CD8-positive, alpha-beta T cell (primary cell): ENCODE measurements at regions of chr17 and their contacts with region 1.

Region 1: GRCh38 chr17:46940621-46941404 is 17.9 kb downstream of the GOSR2 start:
- DNase-seq: peak; percentile 34 to 77 (median 65)
- ATAC-seq: peak; percentile 87
- H3K4me3 ChIP-seq: no peak overlapping the region
- H3K4me3 Mint-ChIP-seq: no peak overlapping the region
- H3K27ac ChIP-seq: no peak overlapping the region
- H3K27ac Mint-ChIP-seq: peak overlapping the region; percentile 10
- H3K4me1 ChIP-seq: peaks cover 13% of the 10 kb centered on the region
- H3K4me1 Mint-ChIP-seq: peaks cover 19% of the 10 kb centered on the region
- H3K27me3 ChIP-seq: no peaks in the 10 kb centered on the region
- H3K27me3 Mint-ChIP-seq: no peaks in the 10 kb centered on the region
- CTCF ChIP-seq: peak; percentile 66

Region 2: GRCh38 chr17:46841561-46842379 is 99.0 kb before region 1 on chr17:
- CTCF ChIA-PET with region 1: interaction called, 4 read pairs
- POLR2A ChIA-PET with region 1: no interaction called
- intact Hi-C with region 1: loop called in 1 of 2 experiments (anchors 1 kb)
- DNase-seq: peak in 3 of 9 experiments; percentile 34 to 48 (median 35)
- ATAC-seq: peak; percentile 31
- H3K4me3 ChIP-seq: no peak overlapping the region
- H3K4me3 Mint-ChIP-seq: no peak overlapping the region
- H3K27ac ChIP-seq: no peak overlapping the region
- H3K27ac Mint-ChIP-seq: no peak overlapping the region
- H3K4me1 ChIP-seq: no peaks in the 10 kb centered on the region
- H3K4me1 Mint-ChIP-seq: peaks cover 7% of the 10 kb centered on the region
- H3K27me3 ChIP-seq: peaks cover 8 to 14% of the 10 kb centered on the region in 2 experiments
- H3K27me3 Mint-ChIP-seq: peaks cover 52% of the 10 kb centered on the region
- CTCF ChIP-seq: peak; percentile 55

Region 3: GRCh38 chr17:46929413-46929812 is 11.4 kb before region 1 on chr17:
- CTCF ChIA-PET with region 1: interaction called, 10 read pairs
- POLR2A ChIA-PET with region 1: no interaction called
- intact Hi-C with region 1: no loop called
- DNase-seq: no peak
- ATAC-seq: no peak
- H3K4me3 ChIP-seq: no peak overlapping the region
- H3K4me3 Mint-ChIP-seq: no peak overlapping the region
- H3K27ac ChIP-seq: no peak overlapping the region
- H3K27ac Mint-ChIP-seq: no peak overlapping the region
- H3K4me1 ChIP-seq: peaks cover 17% of the 10 kb centered on the region
- H3K4me1 Mint-ChIP-seq: peaks cover 47% of the 10 kb centered on the region
- H3K27me3 ChIP-seq: no peaks in the 10 kb centered on the region
- H3K27me3 Mint-ChIP-seq: no peaks in the 10 kb centered on the region
- CTCF ChIP-seq: no peak

Region 4: GRCh38 chr17:46995841-46996571 is 55.2 kb after region 1 on chr17:
- CTCF ChIA-PET with region 1: interaction called, 6 read pairs
- POLR2A ChIA-PET with region 1: no interaction called
- intact Hi-C with region 1: loop called in 1 of 2 experiments (anchors 2 kb)
- DNase-seq: no peak
- ATAC-seq: no peak
- H3K4me3 ChIP-seq: no peak overlapping the region
- H3K4me3 Mint-ChIP-seq: no peak overlapping the region
- H3K27ac ChIP-seq: no peak overlapping the region
- H3K27ac Mint-ChIP-seq: no peak overlapping the region
- H3K4me1 ChIP-seq: peaks cover 1% of the 10 kb centered on the region
- H3K4me1 Mint-ChIP-seq: no peaks in the 10 kb centered on the region
- H3K27me3 ChIP-seq: no peaks in the 10 kb centered on the region
- H3K27me3 Mint-ChIP-seq: no peaks in the 10 kb centered on the region
- CTCF ChIP-seq: no peak

Region 5: DNA sequence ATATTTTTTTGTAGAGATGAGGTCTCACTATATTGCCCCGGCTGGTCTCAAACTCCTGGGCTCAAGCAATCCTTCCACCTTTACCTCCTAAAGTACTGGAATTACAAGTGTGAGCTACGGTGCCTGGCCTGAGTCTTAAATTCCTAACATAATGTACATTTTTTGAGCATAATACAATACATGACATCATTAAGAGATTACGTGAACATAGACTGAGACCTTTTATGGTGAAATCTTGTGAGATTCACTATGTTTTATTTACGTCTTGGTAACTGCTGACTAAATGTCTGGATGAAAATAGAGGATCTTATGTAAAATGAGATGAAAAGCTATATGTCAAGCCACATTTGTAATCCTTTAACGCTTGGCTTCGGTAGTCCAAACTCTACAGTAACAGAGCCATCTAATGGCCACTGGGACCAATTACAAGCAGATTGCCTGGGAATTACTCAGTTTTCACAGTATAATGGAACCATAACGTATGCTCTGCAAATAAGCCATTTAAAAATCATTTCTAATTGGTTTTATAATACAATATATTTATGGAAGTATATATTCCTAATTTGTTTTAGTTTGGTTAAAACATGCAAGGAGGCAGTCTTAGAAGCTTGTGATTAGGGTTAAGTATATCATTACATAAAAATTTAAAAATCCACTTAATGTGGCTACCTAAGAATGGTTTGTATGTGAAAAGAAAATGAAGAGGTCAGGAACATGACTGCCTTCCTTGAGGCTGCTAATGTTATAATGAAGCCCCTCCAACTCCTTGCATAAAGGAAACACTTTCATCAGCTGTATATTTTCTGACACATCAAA is 374.8 kb after region 1 on chr17:
- CTCF ChIA-PET with region 1: interaction called, 3 read pairs
- POLR2A ChIA-PET with region 1: no interaction called
- intact Hi-C with region 1: loop called in 1 of 2 experiments (anchors 2 kb)
- DNase-seq: peak in 3 of 9 experiments; percentile 37 to 74 (median 64)
- ATAC-seq: peak; percentile 93
- H3K4me3 ChIP-seq: no peak overlapping the region
- H3K4me3 Mint-ChIP-seq: no peak overlapping the region
- H3K27ac ChIP-seq: no peak overlapping the region
- H3K27ac Mint-ChIP-seq: no peak overlapping the region
- H3K4me1 ChIP-seq: no peaks in the 10 kb centered on the region
- H3K4me1 Mint-ChIP-seq: no peaks in the 10 kb centered on the region
- H3K27me3 ChIP-seq: no peaks in the 10 kb centered on the region
- H3K27me3 Mint-ChIP-seq: no peaks in the 10 kb centered on the region
- CTCF ChIP-seq: peak; percentile 79